Sciatic nerve (tissue), 2 donors: ENCODE measurements at regions of chr7 and their contacts with region 1.

Region 1: GRCh38 chr7:19713676-19714075 is 4.8 kb upstream of the POLR1F start:
- DNase-seq: no peak
- ATAC-seq: no peak

Region 2: DNA sequence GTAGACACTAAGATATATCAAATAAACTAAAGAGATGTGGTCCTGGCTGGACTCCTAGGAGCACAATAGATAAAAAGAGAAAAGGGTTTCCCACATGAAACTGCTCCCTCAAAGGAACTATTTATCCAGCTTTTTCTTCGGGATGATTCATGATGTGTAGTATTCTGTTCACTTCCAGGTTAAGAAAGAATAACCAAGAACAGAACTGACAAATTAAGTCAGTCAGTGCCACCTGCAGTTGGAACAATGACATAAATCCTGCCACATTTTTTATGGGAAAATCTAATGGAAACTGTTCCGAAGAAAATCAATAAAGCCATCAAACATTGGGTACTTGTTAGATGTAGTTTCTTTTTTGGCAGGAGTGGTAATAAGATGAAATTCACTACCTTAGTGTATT is 91.9 kb before region 1 on chr7:
- intact Hi-C with region 1: no loop called
- DNase-seq: no peak
- ATAC-seq: no peak

Region 3: GRCh38 chr7:20598459-20599309 is 885.0 kb after region 1 on chr7:
- intact Hi-C with region 1: loop called (anchors 5 kb)
- DNase-seq: peak; percentile 69
- ATAC-seq: peak; percentile 85